Activated CD4-positive, alpha-beta T cell treated with anti-CD3 and anti-CD28 coated beads, Interleukin-2, amount 10 ng/mL, durations not matched to agents 24 days and 14 days (primary cell): ENCODE measurements at regions of chr3 and their contacts with region 1.

Region 1: DNA sequence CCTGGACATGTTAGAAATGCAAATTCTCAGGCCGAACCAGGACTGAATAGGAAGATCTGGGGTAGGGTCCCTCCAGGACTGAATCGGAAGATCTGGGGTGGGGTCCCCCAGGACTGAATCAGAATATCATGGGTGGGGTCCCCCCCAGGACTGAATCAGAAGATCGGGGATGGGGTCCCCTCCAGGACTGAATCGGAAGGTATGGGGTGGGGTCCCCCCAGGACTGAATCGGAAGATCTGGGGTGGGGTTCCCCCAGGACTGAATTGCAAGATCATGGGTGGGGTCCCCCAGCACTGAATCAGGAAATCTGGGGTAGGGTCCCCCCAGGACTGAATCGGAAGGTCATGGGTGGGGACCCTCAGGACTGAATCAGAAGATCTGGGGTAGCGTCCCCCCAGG is 48.2 kb upstream of the TNK2 start:
- DNase-seq: no peak
- H3K4me3 Mint-ChIP-seq: peak overlapping the region; percentile 52
- H3K27ac Mint-ChIP-seq: peak overlapping the region; percentile 89
- H3K4me1 Mint-ChIP-seq: peaks cover 32% of the 10 kb centered on the region
- H3K27me3 Mint-ChIP-seq: no peaks in the 10 kb centered on the region

Region 2: DNA sequence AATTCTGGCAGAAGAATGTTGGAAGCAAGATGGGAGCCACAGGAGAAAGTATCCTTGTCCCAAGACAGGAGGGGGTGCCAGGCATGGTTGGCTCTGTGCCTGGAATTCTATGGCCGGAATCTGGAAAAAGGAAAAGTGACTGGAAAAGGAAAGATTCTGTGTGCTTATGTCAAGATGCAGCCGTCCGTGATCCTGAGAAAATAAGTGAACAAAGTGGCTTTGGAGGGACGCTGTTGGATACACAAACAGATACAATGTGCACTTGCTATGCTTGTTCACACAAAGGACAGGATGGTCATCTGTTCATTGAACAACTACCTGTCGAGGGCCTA is 264.3 kb before region 1 on chr3:
- intact Hi-C with region 1: loop called (anchors 5 kb)
- DNase-seq: no peak
- H3K4me3 Mint-ChIP-seq: peak overlapping the region; percentile 41
- H3K27ac Mint-ChIP-seq: peak overlapping the region; percentile 92
- H3K4me1 Mint-ChIP-seq: peaks cover 32% of the 10 kb centered on the region
- H3K27me3 Mint-ChIP-seq: no peaks in the 10 kb centered on the region

Region 3: DNA sequence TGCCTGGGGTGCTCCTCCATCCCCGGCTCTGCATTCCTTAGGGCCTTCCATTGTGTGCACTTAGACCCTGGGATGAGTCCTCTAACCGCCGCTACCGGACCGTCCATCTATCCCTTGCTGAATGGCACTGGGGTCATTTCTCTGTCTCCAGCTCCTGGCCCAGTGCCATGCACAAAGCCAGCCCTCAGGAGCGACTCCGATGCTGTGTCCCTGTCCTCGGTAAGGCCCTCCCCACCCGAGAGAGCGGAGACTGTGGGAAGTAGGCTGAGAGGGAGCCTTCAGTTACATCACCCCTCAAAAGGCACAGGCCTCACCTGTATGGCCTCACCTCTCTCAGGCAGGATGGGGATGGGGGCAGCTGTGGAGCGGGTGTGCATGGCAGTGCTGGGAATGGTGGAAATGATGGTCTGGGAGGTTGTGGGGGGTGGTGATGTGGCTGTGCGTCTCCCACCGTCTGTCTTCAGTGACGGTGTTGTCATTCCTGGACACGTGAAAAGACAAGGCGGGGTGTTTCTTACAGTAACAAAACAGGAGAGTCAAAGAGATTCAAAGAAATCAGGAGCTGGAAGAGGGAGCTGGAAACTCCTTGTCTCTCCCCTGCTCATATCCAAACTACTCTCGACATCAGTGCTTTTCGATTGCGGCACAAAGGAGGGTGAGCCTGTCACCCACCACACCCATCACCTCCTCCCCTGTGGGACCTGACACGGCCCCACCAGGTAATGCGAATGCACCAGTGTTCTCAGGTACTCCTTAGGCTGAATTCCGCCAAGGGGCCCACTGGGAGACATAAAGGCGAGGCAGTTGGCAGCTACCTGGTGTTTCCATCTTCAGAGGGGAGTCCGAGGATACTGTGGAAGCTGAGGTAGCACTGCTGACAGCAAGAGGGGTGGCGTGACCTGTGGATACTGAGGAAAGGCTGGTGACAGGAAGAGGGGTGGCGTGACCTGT is 178.3 kb before region 1 on chr3:
- intact Hi-C with region 1: no loop called
- DNase-seq: no peak
- H3K4me3 Mint-ChIP-seq: no peak overlapping the region
- H3K27ac Mint-ChIP-seq: peak overlapping the region; percentile 68
- H3K4me1 Mint-ChIP-seq: peaks cover 30% of the 10 kb centered on the region
- H3K27me3 Mint-ChIP-seq: no peaks in the 10 kb centered on the region

Region 4: GRCh38 chr3:196179380-196180308 is 223.1 kb after region 1 on chr3:
- intact Hi-C with region 1: no loop called
- DNase-seq: peak; percentile 95
- H3K4me3 Mint-ChIP-seq: peak overlapping the region; percentile 70
- H3K27ac Mint-ChIP-seq: peak overlapping the region; percentile 97
- H3K4me1 Mint-ChIP-seq: peaks cover 50% of the 10 kb centered on the region
- H3K27me3 Mint-ChIP-seq: no peaks in the 10 kb centered on the region